ENCODE measurements at regions of chr16 and their contacts with region 1.

Region 1: DNA sequence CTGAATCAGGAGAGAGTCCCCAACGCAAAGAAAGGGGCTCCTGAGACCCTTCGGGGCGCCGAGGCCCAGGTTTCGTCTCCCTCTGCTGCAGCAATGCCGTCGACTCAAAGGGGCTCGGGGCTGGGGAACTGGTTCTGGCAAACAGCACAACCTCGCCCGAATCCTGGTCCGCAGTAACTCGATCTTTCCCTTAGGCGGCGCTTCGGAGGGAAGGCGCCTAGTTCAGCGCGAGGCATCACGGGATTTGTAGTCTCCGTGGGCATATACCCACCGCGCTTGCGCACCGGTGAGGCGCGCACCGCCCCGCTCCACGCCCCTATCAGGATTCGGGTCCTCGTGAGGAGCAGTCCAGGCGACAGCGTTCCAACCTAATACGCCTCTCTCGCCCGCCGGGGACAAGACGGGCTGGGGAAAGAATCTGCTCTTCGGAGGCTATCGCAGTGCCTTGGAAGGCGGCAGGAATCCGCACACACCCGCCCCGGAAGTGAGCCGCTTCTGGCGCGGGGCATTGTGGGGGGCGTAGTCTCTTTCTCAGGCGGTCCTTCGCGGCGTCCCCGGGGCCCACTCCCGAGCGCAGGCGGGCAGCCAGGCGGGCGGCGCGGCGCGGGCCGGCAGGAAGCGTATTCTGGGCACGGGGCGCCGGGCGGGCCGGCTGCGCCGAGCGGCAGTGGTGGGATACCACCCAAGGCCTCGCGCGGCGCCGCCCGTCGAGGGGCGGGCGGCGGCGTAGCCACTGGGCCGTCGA is at the start of gene THAP11:
- DNase-seq: peak; percentile 95
- H3K4me3 ChIP-seq: peak within 1 kb of the TSS; percentile 32 to 58 (median 57)
- H3K27ac ChIP-seq: peak within 1 kb of the TSS; percentile 77
- H3K4me1 ChIP-seq: peaks cover 26% of the 10 kb centered on the region
- H3K27me3 ChIP-seq: no peaks in the 10 kb centered on the region
- CTCF ChIP-seq: peak; percentile 82 to 93
- POLR2A ChIP-seq: peak; percentile 44
- total RNA-seq, gene THAP11: 22.6 and 24.0 TPM in 2 replicates

Region 2: GRCh38 chr16:67865316-67865715 is 23.4 kb after region 1 on chr16:
- CTCF ChIA-PET with region 1: interaction called, 8 read pairs
- POLR2A ChIA-PET with region 1: no interaction called
- dilution Hi-C with region 1: no loop called
- intact Hi-C with region 1: loop called (anchors 1 kb)
- DNase-seq: peak; percentile 40
- H3K4me3 ChIP-seq: no peak overlapping the region
- H3K27ac ChIP-seq: no peak overlapping the region
- H3K4me1 ChIP-seq: no peaks in the 10 kb centered on the region
- H3K27me3 ChIP-seq: no peaks in the 10 kb centered on the region
- CTCF ChIP-seq: peak; percentile 30 to 57
- POLR2A ChIP-seq: no peak

Region 3: GRCh38 chr16:67872786-67873537 is 31.0 kb after region 1 on chr16 and contains the start of gene EDC4:
- CTCF ChIA-PET with region 1: interaction called, 3 read pairs
- POLR2A ChIA-PET with region 1: interaction called, 4 read pairs
- dilution Hi-C with region 1: no loop called
- intact Hi-C with region 1: loop called (anchors 2 kb)
- DNase-seq: peak; percentile 78
- H3K4me3 ChIP-seq: peak within 1 kb of the TSS; percentile 66 to 79 (median 67)
- H3K27ac ChIP-seq: peak within 1 kb of the TSS; percentile 40
- H3K4me1 ChIP-seq: peaks cover 15% of the 10 kb centered on the region
- H3K27me3 ChIP-seq: no peaks in the 10 kb centered on the region
- CTCF ChIP-seq: no peak
- POLR2A ChIP-seq: peak; percentile 91
- total RNA-seq, gene EDC4: 68.0 and 81.2 TPM in 2 replicates

Region 4: DNA sequence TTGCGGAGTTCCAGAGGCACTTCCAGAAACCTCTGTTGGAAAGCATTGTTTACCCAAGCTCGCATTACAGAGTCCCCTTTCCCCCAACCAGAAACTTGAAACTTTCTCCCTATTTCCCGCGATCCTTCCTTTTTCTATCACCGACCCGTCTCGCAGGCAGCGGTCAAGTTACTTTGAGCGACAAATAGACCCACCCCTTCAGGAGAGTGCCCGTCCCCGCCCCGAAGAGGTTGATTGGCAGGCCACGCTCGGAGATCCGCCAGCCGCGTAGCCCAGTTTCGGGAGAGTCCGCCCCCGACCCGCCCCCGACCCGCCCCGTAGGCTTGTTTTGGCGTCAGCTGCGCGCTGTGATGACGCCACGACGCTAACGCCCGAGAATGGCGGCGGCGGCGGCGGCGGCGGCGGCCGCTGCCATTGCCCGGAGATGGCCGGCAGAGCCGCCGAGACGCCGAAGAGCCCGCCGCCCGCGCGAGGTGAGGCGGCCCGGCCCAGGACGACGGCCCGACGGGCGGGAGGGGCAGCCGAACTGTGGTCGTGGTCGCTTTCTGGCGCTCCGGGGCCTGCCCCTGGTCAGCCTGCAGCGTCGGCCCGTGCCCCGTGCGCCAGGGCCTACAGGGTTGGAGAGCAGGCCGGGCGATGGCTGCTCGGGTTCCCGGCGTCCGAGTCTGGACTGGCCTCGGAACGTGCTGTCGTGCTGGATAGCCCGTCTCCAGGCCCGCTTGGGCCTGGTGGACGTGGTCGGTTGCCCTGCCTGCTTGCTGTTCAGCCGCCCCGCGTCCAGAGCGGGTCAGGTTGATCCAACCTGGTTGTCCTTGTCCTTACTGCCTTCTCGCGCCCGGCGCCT is 51.2 kb after region 1 on chr16 and contains the start of gene PSKH1:
- CTCF ChIA-PET with region 1: no interaction called
- POLR2A ChIA-PET with region 1: no interaction called
- dilution Hi-C with region 1: no loop called
- intact Hi-C with region 1: loop called (anchors 2 kb)
- DNase-seq: peak; percentile 97
- H3K4me3 ChIP-seq: peak within 1 kb of the TSS; percentile 10 to 73 (median 73)
- H3K27ac ChIP-seq: peak within 1 kb of the TSS; percentile 76
- H3K4me1 ChIP-seq: peaks cover 21% of the 10 kb centered on the region
- H3K27me3 ChIP-seq: no peaks in the 10 kb centered on the region
- CTCF ChIP-seq: no peak
- POLR2A ChIP-seq: peak; percentile 59
- total RNA-seq, gene PSKH1: 25.9 and 27.0 TPM in 2 replicates

Region 5: GRCh38 chr16:67935402-67936123 is 93.6 kb after region 1 on chr16:
- CTCF ChIA-PET with region 1: no interaction called
- POLR2A ChIA-PET with region 1: no interaction called
- dilution Hi-C with region 1: no loop called
- intact Hi-C with region 1: loop called (anchors 1 kb)
- DNase-seq: peak; percentile 91
- H3K4me3 ChIP-seq: peak overlapping the region; percentile 31 to 88 (median 58)
- H3K27ac ChIP-seq: peak overlapping the region; percentile 36
- H3K4me1 ChIP-seq: peaks cover 13% of the 10 kb centered on the region
- H3K27me3 ChIP-seq: no peaks in the 10 kb centered on the region
- CTCF ChIP-seq: no peak
- POLR2A ChIP-seq: peak; percentile 71

Measured in endothelial cell of umbilical vein (primary cell).